ENCODE measurements at regions of chr1 and their contacts with region 1.

Region 1: DNA sequence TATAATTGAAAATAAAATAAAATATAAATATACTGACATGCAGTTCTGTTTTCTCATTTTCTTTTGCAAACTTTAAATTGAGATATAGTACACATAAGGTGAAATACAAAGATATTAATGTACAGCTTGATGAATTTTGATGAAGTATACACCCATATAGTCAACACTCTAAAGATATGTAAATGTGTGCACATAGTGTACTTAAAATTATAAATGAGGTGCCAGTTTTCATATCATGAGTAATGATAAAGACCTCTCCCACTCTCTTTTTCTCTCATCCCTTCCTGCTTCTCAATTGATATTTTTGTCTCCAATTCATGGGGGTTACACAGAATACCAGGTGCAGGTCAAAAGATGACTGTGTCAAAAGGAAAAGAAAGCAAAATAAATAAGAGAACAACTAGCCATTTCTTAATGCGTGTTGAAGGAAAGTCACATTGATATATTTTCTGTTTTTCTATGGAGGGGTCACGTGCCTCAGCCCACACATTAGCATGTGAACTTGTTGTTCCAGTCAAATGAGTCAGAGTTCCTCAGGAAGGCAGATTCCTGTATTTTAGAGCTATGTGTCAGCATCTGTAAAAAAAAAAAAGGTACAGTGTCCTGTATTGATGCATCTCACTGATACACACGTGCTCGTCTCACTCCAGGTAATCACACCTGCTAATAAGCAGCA is 64.3 kb upstream of the HOOK1 start:
- DNase-seq: no peak
- CTCF ChIP-seq: no peak

Region 2: DNA sequence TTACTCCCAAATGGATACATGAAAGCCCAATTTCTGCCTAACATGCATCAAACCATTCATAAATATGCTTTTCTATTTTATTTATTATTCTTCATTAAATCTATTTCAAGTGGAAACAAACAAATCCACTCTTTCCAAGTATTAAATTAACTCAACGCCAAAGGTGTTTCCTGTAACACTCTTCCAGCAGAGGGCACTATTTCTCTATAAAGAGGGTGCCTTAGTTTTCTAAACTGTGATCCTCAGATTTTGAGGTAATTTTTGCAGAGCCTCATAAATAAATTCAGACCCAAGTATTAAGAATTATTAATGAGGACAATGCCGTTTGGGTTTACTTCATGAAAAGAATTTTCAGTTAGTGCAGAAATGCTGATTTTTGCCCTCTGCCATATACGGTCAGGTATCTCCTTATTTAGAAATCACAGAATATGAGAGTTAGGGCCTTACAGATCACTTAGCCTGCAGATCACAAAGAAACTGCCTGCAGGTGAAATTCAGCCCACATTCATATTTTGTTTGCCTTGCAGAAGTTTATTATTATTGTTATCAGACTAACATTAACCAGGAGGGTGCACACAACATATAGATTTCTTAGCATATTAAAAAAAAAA is 1010.5 kb before region 1 on chr1:
- CTCF ChIA-PET with region 1: interaction called, 12 read pairs
- POLR2A ChIA-PET with region 1: no interaction called
- DNase-seq: peak; percentile 70
- CTCF ChIP-seq: peak; percentile 56

Region 3: GRCh38 chr1:59645893-59646292 is 104.6 kb before region 1 on chr1:
- CTCF ChIA-PET with region 1: no interaction called
- POLR2A ChIA-PET with region 1: no interaction called
- DNase-seq: no peak
- CTCF ChIP-seq: no peak